Activated T-helper 1 cell treated with anti-CD3 and anti-CD28 coated beads, Interleukin-12 subunit alpha, Interleukin-12 subunit beta, Interleukin-2, Interleukin-4 antibody, amounts not matched to agents 30 ng/mL and 10 ng/mL and 1 ng/mL, durations not matched to agents 14 hours and 24 hours and 36 hours (primary cell): ENCODE measurements at regions of chr12 and their contacts with region 1.

Region 1: GRCh38 chr12:62291864-62292760 is 31.9 kb downstream of the USP15 start:
- DNase-seq: no peak
- H3K4me3 Mint-ChIP-seq: no peak overlapping the region
- H3K27ac Mint-ChIP-seq: peak overlapping the region; percentile 57
- H3K4me1 Mint-ChIP-seq: peaks cover 86% of the 10 kb centered on the region
- H3K27me3 Mint-ChIP-seq: no peaks in the 10 kb centered on the region

Region 2: DNA sequence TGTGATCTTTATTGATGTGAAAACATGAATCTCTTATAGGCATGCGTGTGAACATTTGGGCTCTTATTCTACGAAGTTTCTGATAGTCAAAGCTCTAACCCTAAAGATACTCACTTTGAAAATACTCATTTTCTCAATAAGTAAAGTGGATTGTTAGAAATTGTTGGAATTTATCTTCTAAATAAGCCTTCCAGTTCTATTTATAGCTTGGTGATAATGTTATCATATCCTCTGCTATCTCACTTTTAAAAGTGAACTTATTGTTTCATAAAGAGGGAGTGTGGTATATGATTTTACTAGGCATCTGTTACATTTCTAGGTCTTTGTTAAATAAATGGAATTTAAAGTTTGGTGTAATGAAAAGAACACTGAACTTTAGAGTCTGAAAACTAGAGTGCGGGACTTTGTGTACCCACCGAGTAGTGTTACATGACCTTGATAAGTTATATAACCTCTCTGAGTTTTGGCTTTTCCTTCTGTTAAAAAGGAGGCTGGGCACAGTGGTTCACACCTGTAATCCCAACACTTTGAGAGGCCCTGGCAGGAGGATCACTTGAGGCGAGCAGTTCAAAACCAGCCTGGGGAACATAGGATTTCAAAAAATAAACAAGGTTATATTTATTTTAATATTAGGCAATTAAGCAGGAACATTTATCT is 18.3 kb before region 1 on chr12:
- intact Hi-C with region 1: loop called (anchors 2 kb)
- DNase-seq: no peak
- H3K4me3 Mint-ChIP-seq: no peak overlapping the region
- H3K27ac Mint-ChIP-seq: no peak overlapping the region
- H3K4me1 Mint-ChIP-seq: peaks cover 72% of the 10 kb centered on the region
- H3K27me3 Mint-ChIP-seq: no peaks in the 10 kb centered on the region

Region 3: DNA sequence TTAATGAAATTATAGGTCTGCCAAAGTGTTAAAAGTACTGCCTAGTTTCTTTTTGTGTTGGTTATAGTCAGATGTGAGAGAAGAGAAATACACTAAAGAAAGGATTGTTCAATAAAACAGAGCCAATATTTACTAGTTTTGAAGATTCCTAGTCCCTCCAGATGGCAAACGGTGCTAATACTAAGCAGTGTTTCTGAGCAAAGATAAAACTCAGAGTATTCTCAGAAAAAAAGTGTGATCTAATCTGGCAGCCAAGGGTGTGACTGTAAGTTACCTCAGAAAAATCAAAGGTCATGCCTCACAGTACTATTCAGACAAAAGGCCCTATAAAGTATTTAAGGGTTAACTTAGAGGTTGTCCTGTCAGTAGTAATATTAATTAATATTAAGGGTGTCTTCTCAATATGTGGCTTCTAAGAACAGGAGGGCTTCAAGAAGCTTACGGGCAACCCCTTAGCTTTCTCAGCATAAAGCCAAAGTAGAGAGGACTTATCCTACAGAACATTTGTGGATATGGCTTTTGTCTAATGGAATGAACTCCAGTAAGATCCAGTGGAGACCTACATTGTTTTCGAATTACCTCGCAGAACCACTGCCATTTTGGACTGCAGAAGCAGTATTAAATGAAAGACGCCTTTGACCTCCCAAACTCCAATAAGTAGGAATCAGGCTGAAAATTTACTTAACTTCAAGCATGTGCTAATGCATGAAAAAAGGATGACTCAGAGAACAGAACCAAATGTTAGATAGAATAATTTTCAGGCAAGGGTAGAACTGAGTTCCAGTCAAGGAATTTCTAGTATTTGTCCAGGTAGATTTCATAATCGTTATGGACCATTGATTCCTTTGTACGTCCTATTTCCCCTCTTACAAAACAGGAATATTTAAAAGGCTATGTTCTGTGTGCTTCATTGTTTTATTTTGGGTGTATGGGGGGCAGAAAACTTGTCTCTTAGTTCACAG is 14.7 kb after region 1 on chr12:
- intact Hi-C with region 1: loop called (anchors 2 kb)
- DNase-seq: no peak
- H3K4me3 Mint-ChIP-seq: no peak overlapping the region
- H3K27ac Mint-ChIP-seq: peak overlapping the region; percentile 37
- H3K4me1 Mint-ChIP-seq: peaks cover 66% of the 10 kb centered on the region
- H3K27me3 Mint-ChIP-seq: no peaks in the 10 kb centered on the region

Region 4: GRCh38 chr12:62505636-62506175 is 213.6 kb after region 1 on chr12:
- intact Hi-C with region 1: no loop called
- DNase-seq: no peak
- H3K4me3 Mint-ChIP-seq: no peak overlapping the region
- H3K27ac Mint-ChIP-seq: no peak overlapping the region
- H3K4me1 Mint-ChIP-seq: no peaks in the 10 kb centered on the region
- H3K27me3 Mint-ChIP-seq: no peaks in the 10 kb centered on the region